ENCODE measurements at regions of chr17 and their contacts with region 1.

Region 1: DNA sequence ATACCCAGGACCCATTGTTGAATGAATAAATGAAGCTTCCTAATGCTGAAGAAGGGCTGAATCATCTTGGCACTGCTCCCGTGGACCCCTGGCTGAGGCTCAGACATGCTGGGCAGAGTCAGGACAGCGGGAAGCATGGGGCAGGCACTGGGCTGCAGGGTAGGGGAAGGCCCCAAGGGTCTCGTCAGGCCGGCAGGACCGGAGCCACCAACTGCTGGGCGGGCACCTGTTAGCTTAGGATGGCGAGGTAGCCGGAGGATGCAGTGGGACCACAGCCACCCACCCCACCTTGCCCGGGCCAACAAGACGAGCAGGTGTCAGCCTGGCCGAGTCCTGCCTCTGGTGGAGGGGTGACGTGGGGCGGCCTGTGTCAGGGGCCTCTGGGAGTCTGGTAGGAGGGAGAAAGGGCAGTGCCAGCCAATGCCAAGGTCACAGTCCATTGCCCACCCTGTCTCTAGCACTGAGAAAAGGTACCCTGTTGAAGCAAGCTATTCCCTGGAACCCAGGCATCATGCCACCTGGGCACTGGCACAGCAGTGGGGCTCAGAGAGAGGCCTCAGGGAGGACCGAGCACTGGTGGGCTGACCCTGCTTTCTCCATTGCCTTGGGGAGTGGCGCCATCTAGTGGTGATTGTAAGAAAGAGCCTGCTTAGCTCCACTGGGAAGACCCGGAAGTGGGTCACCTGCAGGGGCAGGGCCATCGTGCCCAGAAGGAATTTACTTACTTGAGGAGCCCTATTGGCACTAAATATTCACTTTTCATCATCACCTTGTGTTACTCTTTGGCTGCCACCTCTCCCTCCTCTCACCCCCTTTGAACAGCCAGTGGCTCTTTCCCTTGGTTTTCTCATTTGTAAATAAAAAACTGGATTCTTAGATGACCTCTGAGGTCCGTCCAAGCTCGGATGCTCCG is 3.0 kb upstream of the DLX3 start:
- DNase-seq: peak; percentile 79 to 96
- H3K4me3 ChIP-seq: no peak overlapping the region
- H3K27ac ChIP-seq: no peak overlapping the region
- H3K4me1 ChIP-seq: peaks cover 28 to 44% (median 38%) of the 10 kb centered on the region in 4 donors
- H3K27me3 ChIP-seq: peaks cover 12 to 98% (median 79%) of the 10 kb centered on the region in 3 donors
- CTCF ChIP-seq: peak in 5 of 7 experiments; percentile 85 to 97 (median 91)
- EP300 ChIP-seq: no peak
- POLR2A ChIP-seq: no peak

Region 2: DNA sequence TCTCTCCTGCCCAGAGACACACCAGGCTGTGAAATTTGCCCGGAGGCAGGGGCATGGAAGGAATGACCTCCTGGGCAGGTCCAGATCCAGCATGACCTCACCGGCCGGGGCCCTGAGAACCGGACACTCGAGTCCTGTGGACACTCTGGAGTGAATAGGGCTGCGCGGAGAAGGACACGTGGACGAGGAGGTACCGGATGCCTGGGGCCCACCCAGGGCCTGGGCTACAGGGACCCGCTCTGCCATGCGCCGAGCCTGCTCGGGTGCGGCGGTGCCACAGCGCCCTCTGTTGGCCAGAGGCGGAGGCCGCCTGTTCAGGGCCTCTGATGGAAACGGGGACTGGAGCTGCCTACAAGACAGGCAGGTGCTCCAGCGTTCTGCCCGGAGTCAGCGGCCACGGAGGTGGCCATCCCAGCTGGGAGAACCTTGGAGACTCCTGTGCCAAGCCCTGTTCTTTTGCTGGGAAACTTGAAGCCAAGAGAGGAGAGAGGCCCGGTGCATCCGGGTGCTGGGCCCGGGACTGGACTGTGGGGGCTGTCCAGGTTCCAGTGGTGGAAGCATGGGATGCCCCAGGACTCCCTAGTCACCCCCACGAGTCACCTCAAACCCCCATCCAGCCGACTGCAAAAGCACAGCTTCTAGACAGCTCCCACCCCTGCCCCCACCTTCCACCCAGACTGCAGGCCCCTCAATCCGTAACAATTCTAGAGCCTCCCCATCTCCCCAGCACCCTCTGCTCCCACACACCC is 441.6 kb before region 1 on chr17:
- intact Hi-C with region 1: loop called (anchors 5 kb)
- DNase-seq: peak; percentile 83 to 94
- H3K4me3 ChIP-seq: no peak overlapping the region
- H3K27ac ChIP-seq: no peak overlapping the region
- H3K4me1 ChIP-seq: peaks cover 8 to 15% (median 11%) of the 10 kb centered on the region in 4 donors
- H3K27me3 ChIP-seq: peaks cover 0 to 22% (median 0%) of the 10 kb centered on the region in 3 donors
- CTCF ChIP-seq: peak in 5 of 7 experiments; percentile 90 to 99 (median 96)
- EP300 ChIP-seq: no peak
- POLR2A ChIP-seq: no peak

Region 3: GRCh38 chr17:49861150-49861892 is 136.7 kb before region 1 on chr17:
- intact Hi-C with region 1: loop called (anchors 5 kb)
- DNase-seq: peak in 1 of 2 donors; percentile 83
- H3K4me3 ChIP-seq: no peak overlapping the region
- H3K27ac ChIP-seq: no peak overlapping the region
- H3K4me1 ChIP-seq: peaks cover 0 to 14% (median 4%) of the 10 kb centered on the region in 4 donors
- H3K27me3 ChIP-seq: peaks cover 0 to 28% (median 4%) of the 10 kb centered on the region in 3 donors
- CTCF ChIP-seq: peak in 5 of 7 experiments; percentile 77 to 88 (median 81)
- EP300 ChIP-seq: no peak
- POLR2A ChIP-seq: no peak

Region 4: DNA sequence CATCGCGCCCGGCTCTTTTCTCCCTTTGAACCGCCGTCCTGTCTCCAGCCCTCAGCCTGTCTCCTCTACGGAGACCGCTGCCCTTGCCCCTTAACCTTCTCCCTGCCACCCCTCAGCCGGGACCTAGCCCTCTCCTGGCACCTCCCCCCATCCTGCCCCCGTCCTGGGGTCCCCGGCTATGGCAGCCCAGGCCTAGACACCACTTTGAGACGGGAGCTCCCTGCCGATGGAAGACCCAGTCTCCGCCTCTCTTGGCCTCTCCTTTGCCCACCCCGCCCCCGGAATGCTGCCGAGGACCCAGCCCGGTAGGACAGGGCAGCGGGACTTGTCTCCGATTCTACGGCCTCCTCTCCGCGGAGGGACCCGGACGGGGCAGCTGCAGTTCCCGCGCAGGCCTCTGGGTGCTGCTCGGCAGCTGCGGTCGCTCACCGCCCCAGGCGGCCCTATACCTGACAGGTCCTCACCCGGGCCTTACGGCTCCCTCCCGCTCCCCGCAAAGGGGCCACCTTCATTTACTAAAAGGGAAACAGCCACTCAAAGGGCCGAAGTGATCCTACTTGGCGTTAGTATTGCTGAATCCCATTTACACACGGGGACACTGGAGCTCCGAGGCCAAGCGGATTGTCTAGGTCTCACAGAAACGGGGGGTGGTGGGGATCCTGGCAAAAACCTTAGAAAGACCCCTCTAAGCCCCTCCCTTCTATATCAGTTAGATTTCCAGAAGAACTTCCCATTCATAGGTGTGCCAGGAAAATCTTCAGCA is 117.6 kb before region 1 on chr17:
- intact Hi-C with region 1: loop called (anchors 5 kb)
- DNase-seq: peak; percentile 79 to 91
- H3K4me3 ChIP-seq: peak overlapping the region in 1 of 4 donors; percentile 33
- H3K27ac ChIP-seq: no peak overlapping the region
- H3K4me1 ChIP-seq: peaks cover 6 to 11% (median 10%) of the 10 kb centered on the region in 4 donors
- H3K27me3 ChIP-seq: peaks cover 11 to 90% (median 38%) of the 10 kb centered on the region in 3 donors
- CTCF ChIP-seq: peak in 5 of 7 experiments; percentile 85 to 99 (median 96)
- EP300 ChIP-seq: no peak
- POLR2A ChIP-seq: no peak

Region 5: DNA sequence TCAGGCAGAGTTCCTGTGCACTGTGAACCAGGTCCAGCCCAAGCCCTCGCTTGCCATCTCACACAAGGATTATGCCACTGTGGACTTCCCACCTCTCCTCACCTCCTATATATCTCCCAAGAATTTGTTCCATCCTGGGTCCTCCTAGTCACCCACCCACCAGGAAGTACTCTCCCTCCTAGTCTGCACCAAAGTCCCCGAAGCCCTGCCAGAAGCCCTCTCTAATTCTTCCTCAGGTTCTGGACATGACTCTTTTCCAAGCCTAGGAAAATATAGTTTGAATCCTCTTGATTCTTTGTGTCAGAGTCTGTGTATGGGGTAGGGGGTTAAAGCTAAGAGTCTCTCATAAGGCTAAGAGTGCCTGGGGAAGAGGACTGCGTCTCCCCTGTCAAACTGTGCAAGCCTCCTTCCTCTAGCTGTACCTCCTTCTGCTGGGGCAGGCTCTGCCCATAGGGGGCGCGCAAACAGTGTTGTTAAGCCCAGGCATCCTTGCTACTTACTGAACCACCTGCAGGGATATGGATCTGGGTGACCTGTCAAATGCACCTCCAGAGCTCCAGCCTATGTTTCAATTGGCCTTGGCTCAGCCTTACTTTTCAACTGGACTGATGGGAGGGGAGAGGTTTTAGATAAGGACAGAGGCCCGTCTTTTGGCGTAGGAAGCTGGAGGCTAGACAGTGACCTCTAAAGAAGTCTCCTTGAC is 45.7 kb before region 1 on chr17:
- intact Hi-C with region 1: loop called (anchors 5 kb)
- DNase-seq: peak; percentile 80 to 88
- H3K4me3 ChIP-seq: no peak overlapping the region
- H3K27ac ChIP-seq: no peak overlapping the region
- H3K4me1 ChIP-seq: no peaks in the 10 kb centered on the region
- H3K27me3 ChIP-seq: peaks cover 10 to 79% (median 26%) of the 10 kb centered on the region in 3 donors
- CTCF ChIP-seq: peak in 5 of 7 experiments; percentile 49 to 76 (median 63)
- EP300 ChIP-seq: no peak
- POLR2A ChIP-seq: no peak